ENCODE measurements at regions of chr9 and their contacts with region 1.

Region 1: GRCh38 chr9:113143541-113144244 is 7.1 kb upstream of the SLC31A2 start:
- DNase-seq: no peak
- H3K4me3 ChIP-seq: no peak overlapping the region
- H3K27ac ChIP-seq: no peak overlapping the region
- H3K4me1 ChIP-seq: no peaks in the 10 kb centered on the region
- H3K27me3 ChIP-seq: no peaks in the 10 kb centered on the region
- CTCF ChIP-seq: no peak
- POLR2A ChIP-seq: no peak

Region 2: GRCh38 chr9:112894041-112894440 is 249.7 kb before region 1 on chr9:
- intact Hi-C with region 1: no loop called
- DNase-seq: no peak
- H3K4me3 ChIP-seq: no peak overlapping the region
- H3K27ac ChIP-seq: no peak overlapping the region
- H3K4me1 ChIP-seq: no peaks in the 10 kb centered on the region
- H3K27me3 ChIP-seq: peaks cover 0 to 8% of the 10 kb centered on the region in 2 donors
- CTCF ChIP-seq: no peak
- POLR2A ChIP-seq: no peak

Region 3: DNA sequence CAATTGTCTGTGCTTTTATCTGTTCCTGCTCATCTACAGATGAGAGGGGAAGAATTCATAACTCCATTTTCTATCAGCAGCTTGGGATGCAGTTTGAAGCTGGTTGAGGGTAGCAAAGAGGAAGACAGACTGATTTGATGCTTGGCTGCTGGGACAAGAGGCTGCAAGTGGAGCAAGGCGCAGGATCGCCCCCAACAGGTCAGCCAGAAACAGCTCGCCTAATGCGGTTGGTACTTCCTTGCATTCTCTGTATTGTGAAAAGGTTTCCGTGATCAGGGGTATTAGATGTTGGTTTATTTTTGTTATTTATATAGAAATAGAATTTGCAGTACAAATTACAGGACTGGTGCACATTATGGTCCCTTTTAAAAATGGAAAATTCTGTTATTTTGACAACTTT is 172.3 kb before region 1 on chr9:
- intact Hi-C with region 1: no loop called
- DNase-seq: no peak
- H3K4me3 ChIP-seq: no peak overlapping the region
- H3K27ac ChIP-seq: no peak overlapping the region
- H3K4me1 ChIP-seq: no peaks in the 10 kb centered on the region
- H3K27me3 ChIP-seq: no peaks in the 10 kb centered on the region
- CTCF ChIP-seq: no peak
- POLR2A ChIP-seq: no peak

Region 4: GRCh38 chr9:113187935-113188595 is 44.4 kb after region 1 on chr9:
- intact Hi-C with region 1: no loop called
- DNase-seq: no peak
- H3K4me3 ChIP-seq: peak overlapping the region in 1 of 3 donors; percentile 27
- H3K27ac ChIP-seq: peak overlapping the region in 1 of 2 donors; percentile 41
- H3K4me1 ChIP-seq: no peaks in the 10 kb centered on the region
- H3K27me3 ChIP-seq: no peaks in the 10 kb centered on the region
- CTCF ChIP-seq: no peak
- POLR2A ChIP-seq: no peak

Region 5: DNA sequence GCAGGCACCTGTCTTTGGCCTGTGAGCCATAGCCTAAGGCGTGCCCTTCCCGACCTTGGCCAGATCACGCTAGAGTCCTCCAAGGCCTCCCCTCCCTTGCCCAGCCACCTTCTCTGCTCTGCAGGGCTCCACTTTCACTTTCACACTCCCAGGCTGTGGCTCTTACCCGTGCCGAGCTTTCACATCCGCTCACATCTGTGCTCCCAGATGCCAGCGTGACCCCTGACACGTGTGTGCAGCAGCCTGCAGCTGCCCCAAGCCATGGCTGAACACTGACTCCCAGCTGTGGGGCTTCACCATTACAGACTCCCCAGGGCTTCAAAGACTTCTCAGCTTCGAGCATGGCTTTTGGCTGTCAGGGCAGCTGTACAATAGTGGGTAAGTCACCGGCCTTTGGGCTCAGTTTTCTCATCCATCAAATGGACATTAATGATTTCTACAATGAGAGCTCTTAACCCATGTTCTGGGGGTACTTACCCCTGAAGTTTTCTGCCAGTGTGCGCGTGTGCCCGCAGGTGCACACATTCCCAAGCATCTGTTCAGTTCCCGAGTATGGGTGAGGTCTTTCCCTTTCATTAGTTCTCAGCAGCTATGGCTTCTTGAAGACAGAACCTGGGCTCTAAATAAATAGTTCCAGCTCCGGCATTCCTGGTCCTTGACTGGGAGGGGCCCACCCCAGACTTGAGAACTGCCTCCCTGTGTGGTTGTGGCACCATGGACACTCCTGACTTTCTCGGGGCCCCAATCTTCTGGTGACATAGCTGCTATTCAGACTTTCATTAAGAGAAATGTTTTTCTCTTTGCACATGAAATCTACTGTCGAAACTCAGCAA is 438.4 kb after region 1 on chr9:
- intact Hi-C with region 1: loop called (anchors 5 kb)
- DNase-seq: peak in 1 of 2 donors; percentile 56
- H3K4me3 ChIP-seq: peak overlapping the region; percentile 5 to 30 (median 5)
- H3K27ac ChIP-seq: peak overlapping the region; percentile 89 to 91
- H3K4me1 ChIP-seq: peaks cover 4 to 33% of the 10 kb centered on the region in 2 donors
- H3K27me3 ChIP-seq: no peaks in the 10 kb centered on the region
- CTCF ChIP-seq: no peak
- POLR2A ChIP-seq: no peak

Measured in breast epithelium (tissue), 4 donors.